Transverse colon (tissue), 4 donors: ENCODE measurements at regions of chr4 and their contacts with region 1.

Region 1: DNA sequence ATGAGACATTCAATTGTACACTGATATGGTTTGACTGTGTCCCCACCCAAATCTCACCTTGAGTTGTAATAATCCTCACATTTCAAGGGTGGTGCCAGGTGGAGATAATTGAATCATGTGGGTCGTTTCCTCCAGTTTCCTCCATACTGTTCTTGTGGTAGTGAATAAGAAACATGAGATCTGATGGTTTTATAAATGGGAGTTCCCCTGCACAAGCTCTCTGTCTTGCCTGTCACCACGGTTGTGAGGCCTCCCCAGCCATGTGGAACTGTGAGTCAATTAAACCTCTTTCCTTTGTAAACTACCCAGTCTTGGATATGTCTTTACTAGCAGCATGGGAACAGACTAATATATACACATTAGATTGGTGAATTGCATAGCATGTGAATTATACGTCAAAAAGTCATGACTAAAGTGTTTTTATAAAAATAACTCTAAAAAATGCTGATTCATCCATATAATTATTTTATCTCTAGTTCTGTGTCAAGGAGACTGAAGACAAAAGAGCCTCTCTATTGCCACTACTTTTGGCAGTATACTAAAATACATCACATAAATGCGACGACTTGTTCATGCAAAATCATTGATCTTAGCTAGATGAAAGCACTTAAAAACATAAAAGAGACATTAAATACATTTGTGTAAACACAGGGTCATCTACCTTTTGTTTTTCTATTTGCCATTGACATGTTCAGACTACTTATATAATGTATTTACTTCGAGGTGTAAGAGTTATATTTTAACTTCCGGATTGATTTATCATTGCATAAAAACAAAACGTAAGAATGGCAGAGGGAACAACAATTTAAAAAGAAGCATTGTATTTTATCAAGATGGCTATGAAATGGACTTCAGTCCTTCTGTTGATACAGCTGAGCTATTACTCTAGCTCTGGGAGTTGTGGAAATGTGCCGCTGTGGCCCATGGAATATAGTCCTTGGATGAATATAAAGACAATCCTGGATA is 50.1 kb downstream of the YTHDC1 start:
- DNase-seq: no peak
- H3K4me3 ChIP-seq: no peak overlapping the region
- H3K27ac ChIP-seq: no peak overlapping the region
- H3K4me1 ChIP-seq: no peaks in the 10 kb centered on the region
- H3K27me3 ChIP-seq: no peaks in the 10 kb centered on the region
- CTCF ChIP-seq: no peak
- EP300 ChIP-seq: no peak
- POLR2A ChIP-seq: no peak

Region 2: GRCh38 chr4:69239557-69240168 is 939.9 kb after region 1 on chr4:
- in situ Hi-C with region 1: no loop called
- intact Hi-C with region 1: loop called (anchors 5 kb)
- DNase-seq: no peak
- H3K4me3 ChIP-seq: no peak overlapping the region
- H3K27ac ChIP-seq: peak overlapping the region; percentile 37 to 64 (median 63)
- H3K4me1 ChIP-seq: peaks cover 0 to 11% (median 4%) of the 10 kb centered on the region in 4 donors
- H3K27me3 ChIP-seq: no peaks in the 10 kb centered on the region
- CTCF ChIP-seq: peak in 1 of 5 experiments; percentile 14
- EP300 ChIP-seq: no peak
- POLR2A ChIP-seq: no peak